ENCODE measurements at regions of chrX and their contacts with region 1.

Region 1: DNA sequence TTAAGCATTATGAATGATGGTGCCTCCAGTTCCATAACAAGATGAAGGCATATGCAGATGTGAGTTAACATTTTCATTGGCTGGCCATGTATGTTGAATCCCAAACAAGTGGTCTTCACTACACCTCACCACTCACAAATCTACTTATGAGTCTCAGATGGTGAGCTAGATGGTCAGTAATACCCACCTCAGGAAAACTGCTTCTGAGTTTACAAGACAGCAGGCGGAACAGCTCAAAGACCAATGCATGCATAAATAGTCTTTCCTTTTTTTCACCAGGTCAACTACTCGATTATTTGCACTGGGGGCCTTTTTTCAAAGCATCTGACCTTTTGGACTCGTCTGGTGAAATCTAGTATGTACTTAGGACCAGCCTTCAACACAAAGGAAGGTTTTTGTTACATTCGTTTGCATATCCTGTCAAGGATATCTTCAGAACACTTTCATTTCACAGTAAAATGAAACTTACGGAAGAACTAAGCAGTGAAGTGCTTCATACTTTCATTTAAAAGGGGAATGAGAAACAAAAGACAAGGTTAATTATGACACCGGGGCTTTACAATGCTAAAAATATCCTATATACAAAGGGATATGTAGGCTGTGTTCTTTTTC is 23.1 kb upstream of the TLR7 start:
- DNase-seq: peak in 1 of 2 donors; percentile 6
- ATAC-seq: no peak
- H3K4me3 ChIP-seq: no peak overlapping the region
- H3K4me3 Mint-ChIP-seq: peak overlapping the region; percentile 25
- H3K27ac ChIP-seq: peak overlapping the region; percentile 3
- H3K27ac Mint-ChIP-seq: peak overlapping the region in 1 of 2 donors; percentile 22
- H3K4me1 ChIP-seq: no peaks in the 10 kb centered on the region
- H3K4me1 Mint-ChIP-seq: no peaks in the 10 kb centered on the region
- H3K27me3 ChIP-seq: no peaks in the 10 kb centered on the region
- H3K27me3 Mint-ChIP-seq: peaks cover 0 to 11% of the 10 kb centered on the region in 2 donors
- CTCF ChIP-seq: no peak

Region 2: DNA sequence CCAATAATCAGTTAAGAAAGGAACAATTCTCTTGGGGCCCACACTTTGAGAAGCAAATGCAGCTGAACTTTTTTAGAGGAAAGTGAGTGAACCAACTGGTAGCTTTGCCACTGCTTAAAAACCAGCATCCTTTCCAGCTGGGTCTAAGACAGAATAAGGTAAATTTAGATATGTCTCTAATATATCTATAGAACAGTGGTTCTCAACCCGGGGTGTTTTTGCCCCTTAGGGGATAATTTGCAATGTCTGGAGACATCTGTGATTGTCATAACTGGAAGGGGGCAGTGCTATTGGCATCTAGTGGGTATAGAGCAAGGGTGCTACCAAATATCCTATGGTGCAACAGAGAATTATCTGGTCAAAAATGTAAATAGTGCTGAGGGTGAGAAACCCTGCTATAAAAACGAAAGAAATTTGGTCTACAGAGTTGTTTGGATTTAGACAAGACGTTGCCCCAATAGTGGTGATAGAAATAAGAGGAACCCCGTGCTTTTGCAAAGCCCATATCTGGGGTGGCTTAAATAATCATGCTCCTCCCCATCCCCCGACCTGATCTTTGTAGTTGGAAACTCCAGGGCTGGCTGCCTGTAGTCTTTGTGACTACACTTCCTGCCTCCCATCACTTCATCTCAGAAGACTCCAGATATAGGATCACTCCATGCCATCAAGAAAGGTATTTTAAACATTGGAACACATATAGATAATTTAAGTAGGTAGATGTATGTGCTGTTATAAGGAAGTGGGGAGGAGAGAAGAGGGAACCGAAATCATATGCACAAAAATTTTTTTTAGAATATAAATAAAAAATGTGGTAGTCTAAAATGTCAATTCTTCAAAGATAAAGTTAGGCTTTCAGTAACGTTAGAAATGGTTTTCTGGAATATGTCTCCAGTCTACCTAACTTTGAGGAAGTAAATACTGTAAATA is 22.9 kb after region 1 on chrX and contains the start of gene TLR7:
- intact Hi-C with region 1: no loop called
- DNase-seq: no peak
- ATAC-seq: no peak
- H3K4me3 ChIP-seq: peak within 1 kb of the TSS; percentile 23
- H3K4me3 Mint-ChIP-seq: no peak within 1 kb of the TSS
- H3K27ac ChIP-seq: peak within 1 kb of the TSS; percentile 20
- H3K27ac Mint-ChIP-seq: no peak within 1 kb of the TSS
- H3K4me1 ChIP-seq: no peaks in the 10 kb centered on the region
- H3K4me1 Mint-ChIP-seq: no peaks in the 10 kb centered on the region
- H3K27me3 ChIP-seq: no peaks in the 10 kb centered on the region
- H3K27me3 Mint-ChIP-seq: peaks cover 0 to 11% of the 10 kb centered on the region in 2 donors
- CTCF ChIP-seq: no peak
- total RNA-seq, gene TLR7: 0.14 to 0.73 (median 0.55) TPM

Region 3: GRCh38 chrX:13194291-13195103 is 350.7 kb after region 1 on chrX:
- intact Hi-C with region 1: loop called (anchors 5 kb)
- DNase-seq: no peak
- ATAC-seq: no peak
- H3K4me3 ChIP-seq: no peak overlapping the region
- H3K4me3 Mint-ChIP-seq: no peak overlapping the region
- H3K27ac ChIP-seq: no peak overlapping the region
- H3K27ac Mint-ChIP-seq: no peak overlapping the region
- H3K4me1 ChIP-seq: no peaks in the 10 kb centered on the region
- H3K4me1 Mint-ChIP-seq: peaks cover 0 to 5% of the 10 kb centered on the region in 2 donors
- H3K27me3 ChIP-seq: no peaks in the 10 kb centered on the region
- H3K27me3 Mint-ChIP-seq: peaks cover 0 to 32% of the 10 kb centered on the region in 2 donors
- CTCF ChIP-seq: no peak